ENCODE measurements at regions of chr20 and their contacts with region 1.

Region 1: DNA sequence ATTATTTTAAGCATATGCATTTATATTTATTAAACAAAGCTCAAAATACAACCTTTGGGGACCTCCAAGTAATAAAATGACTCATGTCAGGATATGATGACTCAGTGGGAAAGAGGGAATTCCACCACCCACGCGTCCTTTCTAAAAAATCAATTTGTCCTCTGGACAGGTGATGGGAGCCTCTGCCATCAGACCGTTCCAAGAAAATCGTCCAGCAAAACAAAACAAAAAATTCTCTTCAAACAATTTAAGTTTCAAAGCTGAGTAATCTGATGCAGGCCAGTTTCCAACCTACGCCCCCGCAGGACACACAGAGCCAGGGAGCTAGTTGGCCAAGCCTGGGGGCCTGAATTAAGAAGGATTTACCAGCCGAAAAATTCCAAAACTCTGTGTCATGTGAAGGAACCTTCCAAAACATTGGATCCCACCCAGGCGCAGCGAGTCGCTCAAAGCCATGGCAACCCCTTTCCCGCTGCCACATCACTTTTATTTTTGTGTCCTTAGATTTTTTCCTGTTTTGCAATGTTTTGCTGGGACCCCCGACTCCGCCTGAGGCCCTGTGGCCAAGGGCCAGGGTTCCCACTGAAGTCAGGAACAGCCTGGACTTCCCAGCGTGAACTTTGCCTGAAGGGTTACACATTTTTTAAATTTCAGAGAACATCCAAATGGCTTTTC is 95.3 kb downstream of the NFATC2 start:
- DNase-seq: peak; percentile 94

Region 2: GRCh38 chr20:51562332-51563155 is 115.3 kb after region 1 on chr20:
- intact Hi-C with region 1: loop called (anchors 10 kb)
- DNase-seq: peak; percentile 96

Measured in posterior vena cava (tissue), 2 donors.